Breast epithelium (tissue), 4 donors: ENCODE measurements at regions of chr2 and their contacts with region 1.

Region 1: DNA sequence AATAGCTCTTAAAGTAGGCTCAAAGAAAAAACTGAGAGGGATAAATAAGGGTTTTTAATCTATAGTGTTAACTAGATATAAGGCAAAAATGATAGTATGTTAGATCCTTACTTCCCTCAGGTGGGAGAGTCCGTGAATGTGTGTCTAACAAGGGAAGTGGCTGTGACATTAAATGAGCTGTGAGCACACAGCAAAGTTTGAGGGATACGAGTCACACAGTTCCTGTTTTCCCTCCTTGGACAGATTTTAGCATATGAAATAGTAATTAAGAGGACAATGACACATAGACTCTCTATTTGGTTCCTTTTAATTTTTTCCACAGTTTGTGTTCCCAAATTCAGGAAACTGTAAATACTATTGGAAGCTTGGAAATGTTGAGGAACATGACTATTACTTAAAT is 148.4 kb upstream of the CAVIN2 start:
- DNase-seq: no peak
- H3K4me3 ChIP-seq: no peak overlapping the region
- H3K27ac ChIP-seq: no peak overlapping the region
- H3K4me1 ChIP-seq: no peaks in the 10 kb centered on the region
- H3K27me3 ChIP-seq: no peaks in the 10 kb centered on the region
- CTCF ChIP-seq: no peak
- POLR2A ChIP-seq: no peak

Region 2: DNA sequence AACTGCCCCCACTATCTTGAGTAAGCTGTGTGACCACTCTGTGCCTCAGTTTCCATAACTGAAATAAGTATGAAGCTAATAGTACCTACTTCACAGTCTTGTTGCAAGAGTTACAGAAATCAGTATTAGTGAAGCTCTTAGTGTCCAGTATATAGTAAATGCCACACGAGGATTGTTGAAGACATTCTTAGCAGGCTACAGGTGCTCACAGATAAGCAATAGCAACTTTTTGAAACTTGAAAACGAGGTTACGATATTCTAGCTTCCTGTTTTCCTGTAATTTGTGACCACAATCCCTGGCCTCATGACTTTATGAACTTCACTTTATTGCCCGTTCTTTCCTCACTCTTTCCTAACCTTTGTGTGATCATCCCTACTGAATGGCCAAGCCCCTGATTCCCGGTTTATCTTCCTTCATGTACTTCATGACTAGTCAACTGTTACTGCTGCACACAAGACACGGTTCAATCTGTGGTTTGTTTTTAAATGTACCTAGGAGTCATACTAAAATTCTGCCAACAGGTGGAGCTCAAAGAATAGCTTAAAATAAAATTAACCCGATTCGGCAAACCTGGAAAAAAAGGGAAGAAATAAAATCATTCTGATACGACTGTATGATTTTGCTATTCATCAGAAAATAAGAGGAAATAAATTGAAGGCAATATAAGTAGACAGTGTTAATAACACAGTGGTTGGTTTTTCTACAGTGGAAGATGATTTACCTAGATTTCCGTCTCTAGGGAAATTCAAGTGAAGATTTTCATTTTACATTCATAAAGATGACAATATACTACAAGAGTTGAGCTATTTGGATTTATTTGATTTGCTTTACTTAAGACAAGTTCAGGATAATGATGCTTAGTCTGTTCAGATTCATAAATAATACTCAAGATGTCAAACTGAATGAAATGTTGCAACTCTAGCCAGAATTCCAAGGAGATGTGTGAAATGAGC is 943.2 kb before region 1 on chr2:
- intact Hi-C with region 1: no loop called
- DNase-seq: no peak
- H3K4me3 ChIP-seq: no peak overlapping the region
- H3K27ac ChIP-seq: no peak overlapping the region
- H3K4me1 ChIP-seq: no peaks in the 10 kb centered on the region
- H3K27me3 ChIP-seq: no peaks in the 10 kb centered on the region
- CTCF ChIP-seq: peak; percentile 50 to 76 (median 67)
- POLR2A ChIP-seq: no peak

Region 3: DNA sequence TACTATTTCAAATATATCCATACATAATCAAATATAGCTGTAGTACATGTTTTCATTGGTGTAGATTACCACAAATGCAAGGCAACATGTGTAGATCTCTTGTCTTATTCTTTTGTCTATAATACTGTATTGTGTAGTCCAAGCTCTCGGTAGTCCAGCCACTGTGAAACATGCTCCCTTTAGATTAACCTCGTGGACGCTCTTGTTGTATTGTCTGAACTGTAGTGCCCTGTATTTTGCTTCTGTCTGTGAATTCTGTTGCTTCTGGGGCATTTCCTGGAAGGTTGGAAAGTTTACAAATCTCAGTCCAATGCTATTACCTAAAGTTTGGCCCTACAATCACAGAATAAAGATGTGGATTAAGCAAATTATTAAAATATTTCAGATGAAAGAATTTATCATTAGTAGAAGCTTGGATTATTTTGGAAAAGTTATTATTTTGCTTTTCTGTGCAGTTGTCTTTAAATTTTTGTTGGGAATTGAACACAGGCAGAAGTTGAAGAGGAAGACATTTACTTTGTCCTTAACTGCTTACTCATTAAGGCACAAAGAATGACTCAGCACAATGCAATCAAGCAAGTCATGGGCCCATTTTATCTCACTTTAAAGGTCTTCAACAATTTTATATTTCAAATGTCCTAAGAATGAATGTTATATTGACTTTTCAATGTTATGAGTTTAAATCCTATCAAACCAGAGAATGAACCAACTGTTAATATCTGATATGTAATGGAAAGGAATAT is 45.0 kb before region 1 on chr2:
- intact Hi-C with region 1: no loop called
- DNase-seq: no peak
- H3K4me3 ChIP-seq: no peak overlapping the region
- H3K27ac ChIP-seq: no peak overlapping the region
- H3K4me1 ChIP-seq: no peaks in the 10 kb centered on the region
- H3K27me3 ChIP-seq: no peaks in the 10 kb centered on the region
- CTCF ChIP-seq: no peak
- POLR2A ChIP-seq: no peak

Region 4: GRCh38 chr2:191976436-191976835 is 18.8 kb before region 1 on chr2:
- intact Hi-C with region 1: no loop called
- DNase-seq: no peak
- H3K4me3 ChIP-seq: no peak overlapping the region
- H3K27ac ChIP-seq: no peak overlapping the region
- H3K4me1 ChIP-seq: no peaks in the 10 kb centered on the region
- H3K27me3 ChIP-seq: no peaks in the 10 kb centered on the region
- CTCF ChIP-seq: no peak
- POLR2A ChIP-seq: no peak

Region 5: GRCh38 chr2:192029089-192029488 is 33.8 kb after region 1 on chr2:
- intact Hi-C with region 1: loop called (anchors 2 kb)
- DNase-seq: no peak
- H3K4me3 ChIP-seq: no peak overlapping the region
- H3K27ac ChIP-seq: no peak overlapping the region
- H3K4me1 ChIP-seq: no peaks in the 10 kb centered on the region
- H3K27me3 ChIP-seq: no peaks in the 10 kb centered on the region
- CTCF ChIP-seq: no peak
- POLR2A ChIP-seq: no peak